HCT116 (cell line): ENCODE measurements at regions of chr11 and their contacts with region 1.

Region 1: GRCh38 chr11:6481012-6481923 is at the starts of genes ARFIP2 and TIMM10B:
- DNase-seq: peak; percentile 94
- ATAC-seq: peak; percentile 94
- H3K4me3 ChIP-seq: peak within 1 kb of the TSS; percentile 86 to 96
- H3K27ac ChIP-seq: peak within 1 kb of the TSS; percentile 57
- H3K4me1 ChIP-seq: peaks cover 13 to 21% of the 10 kb centered on the region in 2 experiments; a peak in 3 of 4 replicates
- H3K27me3 ChIP-seq: no peaks in the 10 kb centered on the region
- CTCF ChIP-seq: no peak
- POLR2A ChIP-seq: peak; percentile 75
- RAD21 ChIP-seq: no peak
- total RNA-seq, gene ARFIP2: 77.9 TPM
- total RNA-seq, gene TIMM10B: 22.9 TPM

Region 2: GRCh38 chr11:6389921-6390724 is 91.1 kb before region 1 on chr11 and contains the start of gene SMPD1:
- CTCF ChIA-PET with region 1: no interaction called
- POLR2A ChIA-PET with region 1: no interaction called
- RAD21 ChIA-PET with region 1: interaction called in 1 of 2 experiments, 5 read pairs
- intact Hi-C with region 1: loop called (anchors 2 kb)
- DNase-seq: peak; percentile 81
- ATAC-seq: peak; percentile 92
- H3K4me3 ChIP-seq: peak within 1 kb of the TSS; percentile 55 to 64
- H3K27ac ChIP-seq: peak within 1 kb of the TSS; percentile 48; the same call in 1 of the 2 replicates
- H3K4me1 ChIP-seq: peaks cover 14 to 37% of the 10 kb centered on the region in 2 experiments
- H3K27me3 ChIP-seq: no peaks in the 10 kb centered on the region
- CTCF ChIP-seq: no peak
- POLR2A ChIP-seq: no peak
- RAD21 ChIP-seq: no peak
- total RNA-seq, gene SMPD1: 2.8 TPM

Region 3: GRCh38 chr11:6497069-6497839 is 16.0 kb after region 1 on chr11 and contains the start of gene DNHD1:
- CTCF ChIA-PET with region 1: no interaction called
- POLR2A ChIA-PET with region 1: no interaction called
- RAD21 ChIA-PET with region 1: no interaction called
- intact Hi-C with region 1: no loop called
- DNase-seq: no peak
- ATAC-seq: no peak
- H3K4me3 ChIP-seq: no peak within 1 kb of the TSS
- H3K27ac ChIP-seq: no peak within 1 kb of the TSS
- H3K4me1 ChIP-seq: peaks cover 0 to 4% of the 10 kb centered on the region in 2 experiments; a peak in 1 of 4 replicates
- H3K27me3 ChIP-seq: no peaks in the 10 kb centered on the region
- CTCF ChIP-seq: no peak
- POLR2A ChIP-seq: no peak
- RAD21 ChIP-seq: no peak
- total RNA-seq, gene DNHD1: 8.0 TPM

Region 4: GRCh38 chr11:6603287-6604080 is 122.2 kb after region 1 on chr11 and contains the starts of genes ILK and RRP8:
- CTCF ChIA-PET with region 1: no interaction called
- POLR2A ChIA-PET with region 1: no interaction called
- RAD21 ChIA-PET with region 1: no interaction called
- intact Hi-C with region 1: loop called (anchors 2 kb)
- DNase-seq: peak; percentile 68
- ATAC-seq: peak; percentile 88
- H3K4me3 ChIP-seq: peak within 1 kb of the TSS; percentile 81 to 96
- H3K27ac ChIP-seq: peak within 1 kb of the TSS; percentile 66
- H3K4me1 ChIP-seq: peaks cover 18 to 45% of the 10 kb centered on the region in 2 experiments
- H3K27me3 ChIP-seq: no peaks in the 10 kb centered on the region
- CTCF ChIP-seq: no peak
- POLR2A ChIP-seq: peak; percentile 68
- RAD21 ChIP-seq: no peak
- total RNA-seq, gene ILK: 73.5 TPM
- total RNA-seq, gene RRP8: 17.8 TPM